Activated CD4-positive, alpha-beta memory T cell treated with anti-CD3 and anti-CD28 coated beads for 36 hours (primary cell): ENCODE measurements at regions of chr9 and their contacts with region 1.

Region 1: GRCh38 chr9:806285-807156 is 35.0 kb upstream of the DMRT1 start:
- DNase-seq: no peak
- H3K4me3 Mint-ChIP-seq: no peak overlapping the region
- H3K27ac Mint-ChIP-seq: no peak overlapping the region
- H3K4me1 Mint-ChIP-seq: no peaks in the 10 kb centered on the region
- H3K27me3 Mint-ChIP-seq: peaks cover 7% of the 10 kb centered on the region

Region 2: DNA sequence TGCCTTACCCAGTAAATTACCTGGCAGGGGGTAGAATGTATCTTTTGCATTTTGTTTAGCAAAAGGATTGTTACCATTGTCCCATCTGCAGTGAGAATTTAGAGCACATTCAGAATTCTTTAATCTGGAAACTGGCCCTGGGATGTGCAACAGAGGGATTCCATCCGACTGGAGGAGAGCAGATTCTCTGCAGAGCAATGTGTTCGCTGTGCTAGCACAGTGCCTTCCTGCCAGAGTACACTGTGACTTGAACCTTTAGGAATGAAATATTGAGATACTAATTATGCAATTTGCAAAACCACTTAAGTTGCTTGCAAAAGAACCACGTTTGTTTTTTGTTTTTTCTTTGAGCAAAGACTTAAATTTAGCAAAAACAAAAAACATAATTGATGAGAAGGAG is 12.4 kb after region 1 on chr9:
- CTCF ChIA-PET with region 1: no interaction called
- POLR2A ChIA-PET with region 1: no interaction called
- intact Hi-C with region 1: loop called (anchors 1 kb)
- DNase-seq: no peak
- H3K4me3 Mint-ChIP-seq: no peak overlapping the region
- H3K27ac Mint-ChIP-seq: no peak overlapping the region
- H3K4me1 Mint-ChIP-seq: no peaks in the 10 kb centered on the region
- H3K27me3 Mint-ChIP-seq: peaks cover 3% of the 10 kb centered on the region

Region 3: GRCh38 chr9:846852-847251 is 40.3 kb after region 1 on chr9:
- CTCF ChIA-PET with region 1: no interaction called
- POLR2A ChIA-PET with region 1: no interaction called
- intact Hi-C with region 1: no loop called
- DNase-seq: no peak
- H3K4me3 Mint-ChIP-seq: no peak overlapping the region
- H3K27ac Mint-ChIP-seq: no peak overlapping the region
- H3K4me1 Mint-ChIP-seq: peaks cover 12% of the 10 kb centered on the region
- H3K27me3 Mint-ChIP-seq: peaks cover 41% of the 10 kb centered on the region